Activated CD8-positive, alpha-beta memory T cell treated with anti-CD3 and anti-CD28 coated beads, Interleukin-2, amount 10 ng/mL, durations not matched to agents 7 days and 5 days (primary cell): ENCODE measurements at regions of chr10 and their contacts with region 1.

Region 1: GRCh38 chr10:84264611-84265141 is 19.8 kb downstream of the RGR start:
- DNase-seq: peak; percentile 79
- ATAC-seq: peak; percentile 90
- H3K4me3 Mint-ChIP-seq: no peak overlapping the region
- H3K27ac Mint-ChIP-seq: no peak overlapping the region
- H3K4me1 Mint-ChIP-seq: peaks cover 19% of the 10 kb centered on the region
- H3K27me3 Mint-ChIP-seq: peaks cover 42% of the 10 kb centered on the region

Region 2: DNA sequence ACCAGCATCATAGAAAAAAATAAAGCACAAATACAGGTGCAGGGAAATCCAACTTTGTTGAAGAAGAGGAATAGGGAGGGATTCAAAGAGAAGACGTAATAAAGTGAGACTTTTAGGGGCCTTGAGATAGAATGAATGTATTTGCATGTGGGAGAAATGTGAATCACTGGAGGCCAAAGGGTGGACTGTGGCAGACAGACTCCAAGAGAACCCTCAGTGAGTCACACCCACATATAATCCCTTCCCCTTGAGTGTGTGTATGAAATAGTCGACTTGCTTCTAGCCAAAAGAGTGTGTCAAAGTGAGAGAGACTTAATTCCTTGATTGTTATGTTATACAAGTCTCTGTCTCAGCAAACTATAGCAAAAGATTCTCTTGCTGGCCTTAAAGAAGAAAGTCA is 226.6 kb before region 1 on chr10:
- CTCF ChIA-PET with region 1: no interaction called
- DNase-seq: no peak
- ATAC-seq: no peak
- H3K4me3 Mint-ChIP-seq: no peak overlapping the region
- H3K27ac Mint-ChIP-seq: no peak overlapping the region
- H3K4me1 Mint-ChIP-seq: no peaks in the 10 kb centered on the region
- H3K27me3 Mint-ChIP-seq: no peaks in the 10 kb centered on the region

Region 3: DNA sequence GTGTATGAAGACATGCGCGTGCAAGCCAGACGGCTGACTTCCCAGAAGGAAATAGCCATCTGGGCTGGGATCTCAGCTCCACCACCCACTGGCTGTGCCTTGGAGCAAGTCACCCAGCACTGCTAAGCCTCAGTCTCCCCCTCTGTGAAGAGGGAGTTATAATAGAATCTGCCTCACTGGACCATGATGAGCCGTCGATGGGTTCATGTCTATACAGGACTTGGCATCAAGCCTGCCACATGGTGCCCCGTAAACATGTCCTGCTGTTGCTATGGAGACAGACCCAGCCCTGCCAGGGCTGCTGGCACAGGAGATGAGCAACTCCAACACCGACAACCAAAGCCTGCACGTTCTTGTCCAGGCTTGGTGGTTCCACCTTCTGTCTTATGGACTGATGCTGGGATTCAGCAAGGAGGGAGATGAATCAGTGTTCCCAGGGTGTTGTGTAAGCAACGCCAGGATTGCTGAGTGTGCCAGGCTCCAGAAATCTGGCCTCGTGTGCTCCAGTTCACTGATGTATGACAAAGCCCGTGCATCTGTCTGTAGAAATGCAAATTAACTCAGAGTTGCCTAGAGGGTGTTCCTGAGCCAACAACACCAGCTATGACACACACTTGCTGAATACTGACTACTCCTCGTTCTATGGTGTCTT is 85.5 kb before region 1 on chr10:
- CTCF ChIA-PET with region 1: no interaction called
- DNase-seq: no peak
- ATAC-seq: no peak
- H3K4me3 Mint-ChIP-seq: no peak overlapping the region
- H3K27ac Mint-ChIP-seq: no peak overlapping the region
- H3K4me1 Mint-ChIP-seq: peaks cover 5% of the 10 kb centered on the region
- H3K27me3 Mint-ChIP-seq: no peaks in the 10 kb centered on the region

Region 4: DNA sequence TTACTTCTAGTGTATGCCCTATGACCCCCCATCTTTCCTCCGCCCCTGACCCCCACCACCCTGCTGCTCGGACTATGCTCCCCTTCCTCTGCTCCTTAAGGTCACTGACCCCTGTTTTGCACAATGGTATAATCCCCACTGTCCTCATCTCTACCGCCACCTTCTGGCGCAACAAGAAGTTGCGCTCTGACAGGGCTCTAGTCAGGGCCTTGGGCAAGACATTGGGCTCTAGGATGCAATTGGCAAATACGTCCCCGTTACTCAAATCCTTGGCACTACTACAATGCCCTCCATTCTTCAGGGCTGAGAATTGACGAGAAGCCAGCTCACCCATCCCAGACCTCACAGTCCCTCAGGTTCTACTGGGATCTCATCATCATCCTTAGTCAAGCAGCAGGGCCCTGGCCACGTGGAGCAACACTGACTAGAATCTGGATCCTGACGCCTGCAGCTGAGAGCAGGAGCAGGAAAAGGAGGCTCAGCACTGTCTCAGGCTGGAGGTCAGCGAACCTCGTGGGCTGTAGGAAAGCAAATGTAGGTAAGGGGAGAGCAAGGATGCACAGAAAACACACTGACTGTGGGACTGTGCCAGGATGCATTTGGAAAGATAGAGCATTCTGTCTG is 50.0 kb before region 1 on chr10:
- CTCF ChIA-PET with region 1: no interaction called
- DNase-seq: peak; percentile 62
- ATAC-seq: peak; percentile 89
- H3K4me3 Mint-ChIP-seq: peak overlapping the region; percentile 38
- H3K27ac Mint-ChIP-seq: no peak overlapping the region
- H3K4me1 Mint-ChIP-seq: no peaks in the 10 kb centered on the region
- H3K27me3 Mint-ChIP-seq: no peaks in the 10 kb centered on the region

Region 5: GRCh38 chr10:84291384-84291783 is 26.7 kb after region 1 on chr10:
- CTCF ChIA-PET with region 1: interaction called, 15 read pairs
- DNase-seq: no peak
- ATAC-seq: no peak
- H3K4me3 Mint-ChIP-seq: no peak overlapping the region
- H3K27ac Mint-ChIP-seq: no peak overlapping the region
- H3K4me1 Mint-ChIP-seq: peaks cover 35% of the 10 kb centered on the region
- H3K27me3 Mint-ChIP-seq: peaks cover 31% of the 10 kb centered on the region

Region 6: GRCh38 chr10:84308481-84309304 is 44.0 kb after region 1 on chr10:
- CTCF ChIA-PET with region 1: interaction called, 12 read pairs
- DNase-seq: peak; percentile 64
- ATAC-seq: peak; percentile 65
- H3K4me3 Mint-ChIP-seq: peak overlapping the region; percentile 43
- H3K27ac Mint-ChIP-seq: peak overlapping the region; percentile 78
- H3K4me1 Mint-ChIP-seq: peaks cover 40% of the 10 kb centered on the region
- H3K27me3 Mint-ChIP-seq: peaks cover 26% of the 10 kb centered on the region

Region 7: DNA sequence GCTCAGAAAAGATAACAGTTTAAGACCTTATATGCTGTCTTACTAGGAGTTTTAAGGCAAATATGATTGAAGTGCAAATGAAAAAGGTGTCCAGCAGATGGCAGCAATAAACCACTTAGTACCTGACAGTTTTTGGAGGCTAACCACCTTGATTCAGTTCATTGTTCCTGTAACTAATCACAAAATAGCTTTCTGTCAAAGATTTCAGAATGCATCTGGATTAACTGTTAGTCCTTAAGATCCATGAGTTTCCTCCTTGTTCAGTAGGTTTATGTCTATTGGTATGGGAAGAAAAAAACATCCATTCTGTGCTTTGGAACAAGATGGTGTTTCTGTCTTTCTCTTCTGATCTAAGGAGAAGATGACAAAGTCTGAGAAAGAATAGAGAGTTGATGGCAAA is 110.3 kb after region 1 on chr10:
- CTCF ChIA-PET with region 1: interaction called, 12 read pairs
- DNase-seq: no peak
- ATAC-seq: peak; percentile 45
- H3K4me3 Mint-ChIP-seq: no peak overlapping the region
- H3K27ac Mint-ChIP-seq: no peak overlapping the region
- H3K4me1 Mint-ChIP-seq: peaks cover 31% of the 10 kb centered on the region
- H3K27me3 Mint-ChIP-seq: no peaks in the 10 kb centered on the region